ENCODE measurements at regions of chr1 and their contacts with region 1.

Region 1: GRCh38 chr1:156106624-156107488 is 7.7 kb upstream of the LMNA start:
- DNase-seq: no peak
- H3K4me3 ChIP-seq: no peak overlapping the region
- H3K27ac ChIP-seq: peak overlapping the region; percentile 85
- H3K4me1 ChIP-seq: peaks cover 53% of the 10 kb centered on the region
- H3K27me3 ChIP-seq: no peaks in the 10 kb centered on the region
- CTCF ChIP-seq: no peak

Region 2: GRCh38 chr1:156123356-156124196 is 16.7 kb after region 1 on chr1:
- CTCF ChIA-PET with region 1: no interaction called
- POLR2A ChIA-PET with region 1: no interaction called
- intact Hi-C with region 1: loop called (anchors 1 kb)
- DNase-seq: peak; percentile 92
- H3K4me3 ChIP-seq: peak overlapping the region; percentile 18
- H3K27ac ChIP-seq: peak overlapping the region; percentile 80
- H3K4me1 ChIP-seq: peaks cover 86% of the 10 kb centered on the region
- H3K27me3 ChIP-seq: no peaks in the 10 kb centered on the region
- CTCF ChIP-seq: peak; percentile 39

Measured in A673 (cell line).